Mammary epithelial cell (primary cell): ENCODE measurements at regions of chr3 and their contacts with region 1.

Region 1: GRCh38 chr3:106728315-106729098 is 648.7 kb upstream of the CCDC54 start:
- DNase-seq: peak; percentile 95
- H3K4me3 ChIP-seq: peak overlapping the region; percentile 11 to 24 (median 16)
- H3K27ac ChIP-seq: peak overlapping the region; percentile 94
- H3K4me1 ChIP-seq: peaks cover 29% of the 10 kb centered on the region
- H3K27me3 ChIP-seq: no peaks in the 10 kb centered on the region
- CTCF ChIP-seq: no peak

Region 2: DNA sequence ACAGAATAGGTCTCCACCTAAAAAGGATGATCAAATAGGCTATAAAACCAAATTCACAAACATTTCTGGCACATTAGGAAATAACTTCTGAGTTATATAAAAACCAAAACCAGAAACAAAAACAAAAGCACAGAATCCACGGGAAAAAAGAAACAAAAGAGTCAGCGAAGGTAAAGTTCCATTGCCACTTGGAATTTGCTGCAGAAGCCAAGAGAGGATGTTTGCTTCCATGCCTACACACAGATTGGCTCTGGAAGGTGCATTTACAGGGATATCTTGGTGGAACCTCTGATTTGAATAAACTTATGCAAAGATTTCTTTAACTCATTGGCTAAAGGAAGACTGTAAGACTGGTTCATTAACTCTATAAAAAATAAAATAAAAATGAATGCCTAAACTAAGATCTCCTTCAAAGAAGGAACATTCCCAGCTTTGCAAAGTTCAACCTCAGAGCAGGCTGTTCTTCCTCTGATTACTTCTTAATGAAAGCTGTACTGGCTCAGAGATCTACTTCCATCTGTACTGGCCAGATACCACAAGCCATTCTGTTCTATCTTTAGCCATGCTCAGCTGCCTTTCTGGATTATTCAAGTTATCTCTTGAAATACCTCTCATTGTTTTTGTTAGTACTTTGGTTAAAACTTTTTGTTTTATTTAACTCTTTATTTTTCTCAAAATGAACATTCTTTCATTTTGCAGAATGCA is 111.2 kb after region 1 on chr3:
- CTCF ChIA-PET with region 1: no interaction called
- dilution Hi-C with region 1: no loop called
- in situ Hi-C with region 1: no loop called
- intact Hi-C with region 1: no loop called
- DNase-seq: no peak
- H3K4me3 ChIP-seq: no peak overlapping the region
- H3K27ac ChIP-seq: no peak overlapping the region
- H3K4me1 ChIP-seq: no peaks in the 10 kb centered on the region
- H3K27me3 ChIP-seq: no peaks in the 10 kb centered on the region
- CTCF ChIP-seq: no peak

Region 3: GRCh38 chr3:106862067-106862466 is 133.6 kb after region 1 on chr3:
- CTCF ChIA-PET with region 1: no interaction called
- dilution Hi-C with region 1: no loop called
- in situ Hi-C with region 1: no loop called
- intact Hi-C with region 1: loop called (anchors 5 kb)
- DNase-seq: no peak
- H3K4me3 ChIP-seq: no peak overlapping the region
- H3K27ac ChIP-seq: no peak overlapping the region
- H3K4me1 ChIP-seq: no peaks in the 10 kb centered on the region
- H3K27me3 ChIP-seq: no peaks in the 10 kb centered on the region
- CTCF ChIP-seq: peak; percentile 11 to 42